Panc1 (cell line): ENCODE measurements at regions of chr19 and their contacts with region 1.

Region 1: GRCh38 chr19:53960187-53960586 is 2.5 kb upstream of the CACNG8 start:
- DNase-seq: no peak
- ATAC-seq: no peak
- H3K4me3 ChIP-seq: peak overlapping the region; percentile 26 to 83; a peak in 3 of 4 replicates
- H3K27ac ChIP-seq: peak overlapping the region; percentile 67
- H3K4me1 ChIP-seq: peaks cover 32% of the 10 kb centered on the region
- H3K27me3 ChIP-seq: no peaks in the 10 kb centered on the region
- CTCF ChIP-seq: no peak

Region 2: GRCh38 chr19:54023191-54023590 is 63.0 kb after region 1 on chr19:
- CTCF ChIA-PET with region 1: no interaction called
- POLR2A ChIA-PET with region 1: no interaction called
- in situ Hi-C with region 1: no loop called
- intact Hi-C with region 1: no loop called
- DNase-seq: no peak
- ATAC-seq: no peak
- H3K4me3 ChIP-seq: no peak overlapping the region
- H3K27ac ChIP-seq: peak overlapping the region; percentile 96
- H3K4me1 ChIP-seq: peaks cover 29% of the 10 kb centered on the region
- H3K27me3 ChIP-seq: no peaks in the 10 kb centered on the region
- CTCF ChIP-seq: no peak

Region 3: GRCh38 chr19:54281007-54281728 is 321.0 kb after region 1 on chr19 and contains the start of gene LILRB2:
- CTCF ChIA-PET with region 1: no interaction called
- POLR2A ChIA-PET with region 1: no interaction called
- in situ Hi-C with region 1: no loop called
- intact Hi-C with region 1: no loop called
- DNase-seq: no peak
- ATAC-seq: no peak
- H3K4me3 ChIP-seq: no peak within 1 kb of the TSS
- H3K27ac ChIP-seq: no peak within 1 kb of the TSS
- H3K4me1 ChIP-seq: no peaks in the 10 kb centered on the region
- H3K27me3 ChIP-seq: peaks cover 12% of the 10 kb centered on the region
- CTCF ChIP-seq: no peak
- total RNA-seq, gene LILRB2: not detected

Region 4: DNA sequence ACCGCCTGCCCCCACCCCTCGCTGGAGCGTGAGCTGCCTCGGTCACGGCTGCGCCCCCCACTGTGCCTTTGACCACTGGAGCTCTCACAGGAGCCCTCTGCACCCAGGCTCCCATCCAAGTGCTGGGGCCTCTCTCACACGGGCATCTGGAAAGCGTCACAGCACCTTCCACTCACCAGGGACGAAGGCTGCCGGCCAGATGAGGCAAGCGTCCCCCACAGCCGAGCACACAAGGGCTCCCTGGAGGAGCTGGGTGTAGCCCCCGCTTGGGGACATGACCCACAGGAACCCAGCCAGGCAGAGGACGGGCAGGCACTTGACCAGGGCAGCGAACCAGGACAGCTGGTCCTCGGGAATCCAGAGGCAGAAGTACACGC is 1267.8 kb after region 1 on chr19:
- CTCF ChIA-PET with region 1: interaction called, 10 read pairs
- POLR2A ChIA-PET with region 1: no interaction called
- in situ Hi-C with region 1: no loop called
- intact Hi-C with region 1: no loop called
- DNase-seq: no peak
- ATAC-seq: no peak
- H3K4me3 ChIP-seq: no peak overlapping the region
- H3K27ac ChIP-seq: no peak overlapping the region
- H3K4me1 ChIP-seq: peaks cover 13% of the 10 kb centered on the region; the same call in 1 of the 2 replicates
- H3K27me3 ChIP-seq: no peaks in the 10 kb centered on the region
- CTCF ChIP-seq: no peak